ENCODE measurements at regions of chr15 and their contacts with region 1.

Region 1: DNA sequence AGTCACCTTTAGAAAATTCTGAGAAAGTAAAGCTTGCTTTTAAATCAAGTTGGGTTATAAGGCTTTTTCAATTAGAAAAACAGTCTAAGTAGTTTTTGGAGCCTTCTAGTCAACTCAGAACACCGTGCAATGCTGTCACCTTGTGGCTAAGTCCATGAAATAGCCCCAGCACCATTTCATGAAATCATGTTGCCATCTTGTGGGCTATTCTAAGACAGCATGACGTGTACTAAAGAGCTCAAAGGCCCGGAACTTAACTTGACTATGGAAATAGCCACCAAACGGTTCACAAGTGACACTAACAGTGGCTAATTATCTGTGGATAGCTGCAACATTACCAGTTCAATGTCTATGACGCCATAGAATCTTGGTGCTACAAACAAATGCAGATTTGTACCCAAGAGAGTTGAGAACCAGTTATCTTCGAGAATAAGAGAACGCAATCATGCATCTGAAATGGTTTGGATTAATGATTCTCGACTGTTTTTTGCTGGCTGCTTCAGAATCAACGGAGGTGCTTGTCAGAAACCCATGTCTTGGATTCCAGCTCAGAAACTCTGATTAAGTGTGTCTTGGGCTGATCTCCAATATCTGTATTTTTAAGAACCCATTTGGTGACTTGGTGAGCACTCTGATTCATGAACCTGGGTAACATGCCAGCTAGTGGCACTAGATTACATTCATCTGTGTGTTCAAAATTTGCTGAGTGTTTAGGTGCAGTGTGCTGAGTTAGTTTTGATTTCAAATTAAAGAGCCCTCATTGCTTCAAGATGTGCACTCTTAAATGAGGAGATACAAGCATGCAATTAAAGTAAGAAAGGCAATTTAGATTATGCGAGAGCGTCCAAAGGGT is 111.2 kb upstream of the MCTP2 start:
- ATAC-seq: peak; percentile 89 to 99 (median 98)
- H3K4me3 ChIP-seq: no peak overlapping the region
- H3K27ac ChIP-seq: no peak overlapping the region
- H3K4me1 ChIP-seq: peaks cover 10 to 15% of the 10 kb centered on the region in 2 donors

Region 2: GRCh38 chr15:93030430-93031105 is 1089.6 kb before region 1 on chr15:
- in situ Hi-C with region 1: loop called in 8 of 9 experiments (anchors 10 to 25 kb)
- ATAC-seq: peak; percentile 51 to 86 (median 80)
- H3K4me3 ChIP-seq: no peak overlapping the region
- H3K27ac ChIP-seq: peak overlapping the region in 1 of 2 donors; percentile 37
- H3K4me1 ChIP-seq: peaks cover 16 to 32% of the 10 kb centered on the region in 2 donors

Region 3: DNA sequence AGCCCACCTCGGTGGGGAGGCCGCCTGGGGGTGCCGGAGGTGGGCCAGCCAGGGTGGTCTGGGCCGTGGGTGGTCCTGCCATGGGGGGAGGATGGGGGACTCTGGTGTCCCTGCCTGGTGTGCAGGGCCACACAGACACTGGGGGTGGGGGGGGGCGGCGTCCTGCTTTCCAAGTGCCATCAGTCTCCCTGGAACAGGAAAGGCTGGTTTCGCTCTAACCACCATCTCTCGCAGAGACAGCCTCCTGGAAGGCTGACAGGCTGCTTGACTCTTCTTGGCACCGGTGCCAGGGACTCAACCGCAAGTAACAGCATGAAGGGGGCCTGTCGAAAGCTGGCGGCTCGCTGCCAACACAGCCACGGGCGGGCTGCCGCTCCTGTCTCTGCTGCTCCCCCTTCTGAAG is 1071.4 kb before region 1 on chr15:
- in situ Hi-C with region 1: loop called in 4 of 9 experiments (anchors 10 to 25 kb)
- ATAC-seq: no peak
- H3K4me3 ChIP-seq: no peak overlapping the region
- H3K27ac ChIP-seq: no peak overlapping the region
- H3K4me1 ChIP-seq: no peaks in the 10 kb centered on the region

Region 4: DNA sequence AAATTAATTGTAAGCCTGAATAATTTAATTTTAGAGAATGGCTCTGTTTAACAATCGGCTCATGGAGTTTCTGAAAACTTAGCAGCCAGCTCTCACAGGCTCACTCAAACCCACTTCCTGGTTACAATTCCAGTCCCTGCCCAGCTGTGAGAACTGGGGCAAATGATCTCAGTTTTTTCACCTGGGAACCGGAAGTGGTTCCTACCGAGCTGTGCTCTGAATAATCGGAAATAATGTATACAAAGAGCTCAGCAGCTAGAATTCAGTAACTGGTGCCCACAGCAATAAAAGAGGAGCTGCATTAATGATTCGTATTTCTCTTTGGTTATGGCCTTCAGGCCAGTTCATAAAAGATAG is 133.1 kb before region 1 on chr15:
- in situ Hi-C with region 1: loop called in 4 of 9 experiments (anchors 10 to 25 kb)
- ATAC-seq: no peak
- H3K4me3 ChIP-seq: no peak overlapping the region
- H3K27ac ChIP-seq: no peak overlapping the region
- H3K4me1 ChIP-seq: peaks cover 29 to 37% of the 10 kb centered on the region in 2 donors

Region 5: DNA sequence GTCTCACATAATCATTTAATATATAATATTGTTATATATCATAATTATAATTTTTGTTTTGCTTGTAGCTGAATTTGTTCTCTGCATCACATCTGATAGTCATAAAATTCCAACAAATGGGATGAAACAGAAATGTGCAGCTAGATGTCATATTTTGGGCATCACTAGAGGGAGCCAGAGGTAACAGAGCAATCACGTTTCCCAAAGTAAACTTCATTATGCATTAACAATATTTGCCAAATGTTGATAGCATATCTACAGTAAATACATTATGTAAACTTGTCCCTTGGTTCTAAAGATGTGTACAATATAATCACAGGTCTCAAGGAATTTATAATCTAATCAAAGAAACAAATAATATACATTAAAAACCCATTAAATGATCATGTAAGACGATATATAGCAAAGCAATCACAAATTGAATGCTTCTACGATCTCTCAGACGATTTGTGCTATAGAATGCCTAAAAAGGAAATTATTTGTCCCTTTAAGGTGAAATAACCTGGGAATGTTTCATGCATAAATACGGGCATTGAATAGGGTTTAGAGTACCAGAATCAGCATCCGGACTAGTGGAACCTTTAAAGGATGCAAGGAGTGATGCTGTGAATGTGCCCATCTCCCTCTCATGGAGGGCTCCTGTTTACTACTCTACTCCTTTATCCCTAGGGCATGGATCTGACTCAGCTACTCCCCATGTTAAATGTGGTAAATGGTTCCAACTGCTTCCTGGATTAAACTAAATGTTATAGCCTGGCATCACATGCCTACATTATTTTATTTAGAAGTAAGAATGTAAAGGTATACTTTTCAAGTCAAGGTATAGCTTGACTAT is 122.8 kb before region 1 on chr15:
- in situ Hi-C with region 1: loop called in 3 of 9 experiments (anchors 10 to 25 kb)
- ATAC-seq: no peak
- H3K4me3 ChIP-seq: no peak overlapping the region
- H3K27ac ChIP-seq: no peak overlapping the region
- H3K4me1 ChIP-seq: peaks cover 7 to 27% of the 10 kb centered on the region in 2 donors

Region 6: DNA sequence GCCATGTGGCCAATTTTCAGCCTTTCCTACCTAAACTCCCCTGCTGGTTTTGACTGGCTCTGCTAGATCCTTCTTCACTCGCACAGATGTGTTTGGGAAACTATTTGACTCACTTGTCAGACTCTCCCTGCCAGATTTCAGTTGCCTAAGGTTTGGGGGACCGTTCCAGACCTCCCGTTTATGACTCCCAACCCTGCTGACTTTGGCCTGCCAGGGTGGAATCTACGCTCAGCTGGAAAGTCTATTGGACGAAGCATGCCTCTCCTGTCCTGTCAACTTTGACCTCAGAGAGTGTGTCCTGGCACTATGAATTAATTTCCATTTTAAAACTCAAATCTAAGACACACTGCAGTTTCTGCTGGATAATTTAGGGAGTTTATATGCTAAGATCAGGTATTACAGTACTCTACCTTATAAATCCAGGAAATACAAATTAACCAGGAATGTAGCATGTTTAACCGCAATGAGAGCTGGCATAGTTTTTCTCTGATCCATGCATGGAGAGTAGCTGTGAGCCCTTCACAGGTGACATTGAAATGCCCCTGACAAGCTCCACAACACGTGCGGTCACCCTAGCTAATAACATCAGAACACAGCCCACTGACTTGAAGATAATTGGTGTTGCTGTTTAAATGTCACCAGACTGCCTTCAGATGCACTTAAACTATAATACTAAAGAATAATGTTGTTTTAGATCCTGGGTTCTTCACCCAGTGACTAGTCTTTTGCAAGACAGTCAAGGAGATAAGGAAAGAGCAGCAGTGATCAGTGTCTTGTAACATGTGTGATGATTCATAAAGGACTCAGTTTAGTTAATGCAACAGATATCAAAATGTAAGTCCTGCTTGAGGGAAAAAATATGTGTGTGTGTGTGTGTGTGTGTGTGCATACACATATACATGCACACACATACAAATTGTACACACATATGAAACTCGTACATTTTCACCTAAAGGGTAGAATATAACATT is 111.8 kb before region 1 on chr15:
- in situ Hi-C with region 1: no loop called
- ATAC-seq: peak in 3 of 8 experiments; percentile 34 to 59 (median 38)
- H3K4me3 ChIP-seq: no peak overlapping the region
- H3K27ac ChIP-seq: no peak overlapping the region
- H3K4me1 ChIP-seq: peaks cover 0 to 7% of the 10 kb centered on the region in 2 donors

Region 7: GRCh38 chr15:94263341-94264273 is 143.5 kb after region 1 on chr15:
- in situ Hi-C with region 1: no loop called
- ATAC-seq: peak in 2 of 8 experiments; percentile 75 to 79
- H3K4me3 ChIP-seq: no peak overlapping the region
- H3K27ac ChIP-seq: no peak overlapping the region
- H3K4me1 ChIP-seq: peaks cover 0 to 2% of the 10 kb centered on the region in 2 donors